ENCODE measurements at regions of chr15 and their contacts with region 1.

Region 1: GRCh38 chr15:101657968-101658784 is 6.0 kb upstream of the TM2D3 start:
- DNase-seq: no peak
- ATAC-seq: no peak
- H3K4me3 ChIP-seq: no peak overlapping the region
- H3K4me3 Mint-ChIP-seq: no peak overlapping the region
- H3K27ac ChIP-seq: no peak overlapping the region
- H3K27ac Mint-ChIP-seq: no peak overlapping the region
- H3K4me1 ChIP-seq: peaks cover 0 to 2% of the 10 kb centered on the region in 2 experiments
- H3K4me1 Mint-ChIP-seq: peaks cover 0 to 9% (median 8%) of the 10 kb centered on the region in 3 donors
- H3K27me3 ChIP-seq: no peaks in the 10 kb centered on the region
- H3K27me3 Mint-ChIP-seq: no peaks in the 10 kb centered on the region

Region 2: DNA sequence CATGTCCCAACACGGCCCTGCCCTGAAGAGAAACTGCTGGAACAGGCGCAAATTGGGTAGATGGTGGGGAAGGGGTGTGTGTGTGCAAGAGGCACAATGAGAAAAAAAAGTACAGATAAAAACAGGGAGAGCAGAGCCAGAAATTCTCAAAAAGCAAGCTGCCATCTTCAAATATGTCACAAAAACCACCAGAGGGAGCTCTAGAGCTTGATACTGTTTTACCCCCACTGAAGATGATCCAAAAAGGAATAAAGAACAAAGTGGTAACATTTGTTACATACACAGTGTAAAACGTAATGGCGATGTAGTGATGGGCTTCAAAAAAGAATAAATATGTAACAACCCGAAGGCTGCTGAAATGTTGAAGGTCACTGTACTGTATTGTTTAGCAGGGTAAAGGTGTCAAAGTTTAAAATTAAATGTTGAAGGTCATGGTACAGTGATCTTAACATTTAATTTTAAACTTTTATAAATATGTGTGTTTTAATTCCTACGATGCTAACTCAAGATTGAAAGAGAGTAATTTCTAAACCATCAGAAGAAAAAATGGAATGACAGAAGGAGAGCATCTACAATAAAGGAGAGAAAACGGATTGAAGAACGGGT is 369.2 kb before region 1 on chr15:
- CTCF ChIA-PET with region 1: interaction called, 3 to 12 read pairs
- POLR2A ChIA-PET with region 1: no interaction called
- DNase-seq: peak in 5 of 35 experiments; percentile 17 to 78 (median 33)
- ATAC-seq: peak; percentile 47 to 78 (median 58)
- H3K4me3 ChIP-seq: no peak overlapping the region
- H3K4me3 Mint-ChIP-seq: peak overlapping the region in 1 of 3 donors; percentile 0
- H3K27ac ChIP-seq: no peak overlapping the region
- H3K27ac Mint-ChIP-seq: peak overlapping the region in 1 of 2 donors; percentile 21
- H3K4me1 ChIP-seq: peaks cover 19% of the 10 kb centered on the region in 2 experiments
- H3K4me1 Mint-ChIP-seq: peaks cover 37 to 57% (median 54%) of the 10 kb centered on the region in 3 donors
- H3K27me3 ChIP-seq: no peaks in the 10 kb centered on the region
- H3K27me3 Mint-ChIP-seq: no peaks in the 10 kb centered on the region

Region 3: DNA sequence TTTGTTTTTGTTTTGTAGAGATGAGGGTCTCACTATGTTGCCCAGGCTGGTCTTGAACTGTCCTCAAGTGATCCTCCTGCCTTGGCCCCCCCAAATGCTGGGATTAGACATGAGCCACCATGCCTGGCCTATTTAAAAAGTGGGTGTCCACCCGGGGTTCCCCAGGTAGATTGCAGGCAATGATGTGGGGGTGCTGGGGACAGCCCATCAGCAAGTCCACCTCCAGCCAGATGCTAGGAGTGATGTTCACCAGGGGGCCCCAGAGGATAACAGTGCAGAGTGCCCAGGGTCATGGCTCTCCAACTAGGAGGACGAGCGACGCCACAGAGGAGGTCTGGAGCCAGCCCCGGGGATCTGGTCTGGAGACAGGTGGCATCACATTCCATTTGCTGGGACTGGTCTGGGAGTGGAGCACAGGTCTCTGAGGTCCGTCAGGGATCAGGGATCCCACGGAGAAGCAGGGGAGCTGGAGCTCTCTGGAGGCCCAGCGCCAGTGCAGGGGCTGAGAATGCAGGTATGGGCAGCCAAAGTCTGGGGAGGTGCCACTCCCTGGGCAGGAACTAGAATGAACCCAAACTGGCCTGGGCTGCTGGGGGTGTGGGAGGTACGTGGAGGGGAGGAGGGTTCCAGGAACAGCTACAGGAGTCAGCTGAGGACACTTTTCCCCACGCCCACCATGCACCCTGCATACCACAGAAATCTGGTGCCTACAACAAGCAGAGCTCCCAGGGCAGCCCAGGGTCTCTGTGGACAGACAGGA is 117.5 kb before region 1 on chr15:
- CTCF ChIA-PET with region 1: no interaction called
- POLR2A ChIA-PET with region 1: no interaction called
- DNase-seq: peak in 1 of 35 experiments; percentile 15
- ATAC-seq: no peak
- H3K4me3 ChIP-seq: no peak overlapping the region
- H3K4me3 Mint-ChIP-seq: no peak overlapping the region
- H3K27ac ChIP-seq: no peak overlapping the region
- H3K27ac Mint-ChIP-seq: no peak overlapping the region
- H3K4me1 ChIP-seq: no peaks in the 10 kb centered on the region
- H3K4me1 Mint-ChIP-seq: no peaks in the 10 kb centered on the region
- H3K27me3 ChIP-seq: peaks cover 0 to 23% of the 10 kb centered on the region in 2 experiments
- H3K27me3 Mint-ChIP-seq: peaks cover 12 to 19% of the 10 kb centered on the region in 2 donors

Region 4: DNA sequence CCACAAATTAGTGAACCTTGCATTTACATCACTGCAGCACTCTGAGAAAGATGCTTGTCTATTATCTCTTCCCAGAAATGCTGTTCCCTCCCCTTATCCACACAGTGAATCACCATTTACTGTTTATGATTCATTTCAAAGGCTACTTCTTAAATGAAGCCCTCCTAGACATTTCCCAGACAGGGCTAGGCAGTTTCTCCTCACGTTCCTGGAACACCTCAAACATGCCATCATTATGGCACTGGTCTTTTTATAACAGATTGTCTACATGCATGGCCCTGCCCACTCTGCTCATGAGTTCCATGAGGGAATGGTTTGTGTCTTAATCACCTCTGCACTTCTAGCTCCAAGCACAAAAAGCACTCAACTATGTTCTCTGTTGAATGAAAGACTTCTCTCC is 26.2 kb after region 1 on chr15:
- CTCF ChIA-PET with region 1: no interaction called
- POLR2A ChIA-PET with region 1: no interaction called
- DNase-seq: no peak
- ATAC-seq: no peak
- H3K4me3 ChIP-seq: no peak overlapping the region
- H3K4me3 Mint-ChIP-seq: no peak overlapping the region
- H3K27ac ChIP-seq: no peak overlapping the region
- H3K27ac Mint-ChIP-seq: no peak overlapping the region
- H3K4me1 ChIP-seq: no peaks in the 10 kb centered on the region
- H3K4me1 Mint-ChIP-seq: no peaks in the 10 kb centered on the region
- H3K27me3 ChIP-seq: no peaks in the 10 kb centered on the region
- H3K27me3 Mint-ChIP-seq: no peaks in the 10 kb centered on the region

Region 5: GRCh38 chr15:101795455-101795854 is 137.3 kb after region 1 on chr15:
- CTCF ChIA-PET with region 1: no interaction called
- POLR2A ChIA-PET with region 1: no interaction called
- DNase-seq: no peak
- ATAC-seq: no peak
- H3K4me3 ChIP-seq: no peak overlapping the region
- H3K4me3 Mint-ChIP-seq: no peak overlapping the region
- H3K27ac ChIP-seq: no peak overlapping the region
- H3K27ac Mint-ChIP-seq: no peak overlapping the region
- H3K4me1 ChIP-seq: no peaks in the 10 kb centered on the region
- H3K4me1 Mint-ChIP-seq: no peaks in the 10 kb centered on the region
- H3K27me3 ChIP-seq: peaks cover 0 to 3% of the 10 kb centered on the region in 2 experiments
- H3K27me3 Mint-ChIP-seq: peaks cover 13 to 21% of the 10 kb centered on the region in 2 donors